CD8-positive, alpha-beta T cell (primary cell): ENCODE measurements at regions of chr14 and their contacts with region 1.

Region 1: DNA sequence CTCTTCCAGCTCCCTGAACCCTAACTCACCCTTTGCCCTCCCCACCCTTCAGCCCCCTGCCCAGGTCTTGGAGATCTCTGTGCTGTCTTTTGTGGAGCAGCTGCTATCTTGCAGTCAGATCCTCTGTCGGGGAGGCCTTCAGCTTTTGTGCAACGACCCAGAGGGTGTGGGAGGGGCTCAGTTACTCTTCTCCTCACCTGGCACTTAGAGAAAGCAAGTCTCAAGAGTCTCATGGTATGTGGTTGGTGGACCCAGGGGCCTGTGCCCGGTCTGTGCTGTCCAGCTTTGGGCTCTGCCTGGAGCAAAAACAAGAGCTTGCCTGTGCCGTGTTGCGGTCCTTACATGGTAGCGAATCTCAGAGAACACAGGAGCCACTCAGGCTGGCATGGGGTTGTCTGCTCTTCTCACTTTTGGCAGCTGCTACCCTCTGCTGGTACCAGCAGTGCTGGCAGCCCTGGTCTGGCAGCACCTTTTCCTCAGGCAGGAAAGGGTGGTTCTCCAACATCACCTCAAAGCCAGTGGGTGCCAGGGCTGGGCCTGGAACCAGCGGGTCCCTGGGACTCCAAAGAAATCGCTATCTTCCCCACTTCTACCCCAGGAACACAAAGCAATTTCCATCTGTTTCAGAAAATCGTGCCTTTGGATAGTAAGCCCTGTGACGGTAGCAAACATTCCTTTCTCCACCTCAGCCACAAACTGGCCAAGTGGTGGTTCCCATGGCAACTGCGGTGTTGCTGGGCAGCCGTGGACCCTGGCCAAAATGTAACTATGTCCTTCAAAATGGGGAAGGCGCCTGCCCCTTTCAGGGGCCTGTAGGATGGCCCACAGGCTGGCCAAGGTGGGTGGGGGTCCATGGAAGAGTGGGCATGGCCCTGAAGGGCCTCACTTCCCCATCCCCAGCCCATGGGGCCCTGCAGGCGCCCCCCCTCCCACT is 90.0 kb downstream of the RIN3 start:
- DNase-seq: peak; percentile 41 to 85 (median 63)
- ATAC-seq: peak; percentile 99
- H3K4me3 ChIP-seq: no peak overlapping the region
- H3K4me3 Mint-ChIP-seq: peak overlapping the region; percentile 72
- H3K27ac ChIP-seq: no peak overlapping the region
- H3K27ac Mint-ChIP-seq: peak overlapping the region; percentile 81
- H3K4me1 ChIP-seq: peaks cover 30% of the 10 kb centered on the region
- H3K4me1 Mint-ChIP-seq: peaks cover 47% of the 10 kb centered on the region
- H3K27me3 ChIP-seq: no peaks in the 10 kb centered on the region
- H3K27me3 Mint-ChIP-seq: no peaks in the 10 kb centered on the region
- CTCF ChIP-seq: peak; percentile 68

Region 2: DNA sequence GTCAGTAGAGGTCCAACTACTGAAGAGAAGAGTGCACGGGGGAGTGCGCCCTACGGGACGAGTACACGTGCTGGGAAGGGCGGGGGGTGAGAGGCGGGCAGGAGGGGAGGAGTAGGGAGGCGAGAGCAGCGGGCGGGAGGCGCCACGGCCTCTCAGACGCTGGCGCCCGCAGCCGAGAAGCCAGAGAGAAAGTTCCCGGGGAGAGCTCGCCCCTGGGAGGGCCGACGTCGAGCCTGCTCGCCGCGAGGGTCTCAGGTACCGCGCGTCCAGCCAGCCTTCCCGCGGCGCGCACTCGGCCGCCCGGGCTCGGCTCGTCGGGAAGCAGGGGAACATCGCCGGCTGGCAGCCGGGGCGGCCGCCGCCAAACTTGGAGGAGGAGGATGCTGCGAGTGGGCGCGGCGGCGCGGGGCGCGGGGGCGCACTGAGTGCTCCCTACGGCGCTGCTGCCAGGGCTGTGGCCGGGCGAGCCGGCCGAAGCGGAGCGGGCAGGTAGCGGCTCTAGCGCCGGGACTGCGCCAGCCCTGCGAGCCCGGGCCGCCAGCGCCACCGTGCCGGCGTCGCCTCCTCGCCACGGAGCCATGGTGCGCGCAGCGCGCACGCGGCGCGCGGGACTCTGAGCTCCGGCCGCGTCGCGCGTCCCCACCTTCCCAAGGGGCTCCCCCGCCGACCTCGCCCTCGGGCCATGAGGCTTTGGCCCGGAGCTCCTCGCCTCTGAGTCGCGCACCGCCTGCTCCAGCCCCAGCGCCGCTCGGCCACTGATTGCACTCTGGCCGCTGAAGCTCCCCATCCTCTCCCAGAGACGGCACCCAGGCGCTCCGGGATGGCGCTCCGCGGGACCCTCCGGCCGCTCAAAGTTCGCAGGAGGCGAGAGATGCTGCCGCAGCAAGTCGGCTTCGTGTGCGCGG is 280.3 kb before region 1 on chr14 and contains the start of gene SLC24A4:
- CTCF ChIA-PET with region 1: interaction called, 3 read pairs
- POLR2A ChIA-PET with region 1: no interaction called
- intact Hi-C with region 1: loop called (anchors 1 to 5 kb)
- DNase-seq: peak in 1 of 9 experiments; percentile 17
- ATAC-seq: no peak
- H3K4me3 ChIP-seq: peak within 1 kb of the TSS in 1 of 2 experiments; percentile 27
- H3K4me3 Mint-ChIP-seq: peak within 1 kb of the TSS; percentile 68
- H3K27ac ChIP-seq: no peak within 1 kb of the TSS
- H3K27ac Mint-ChIP-seq: no peak within 1 kb of the TSS
- H3K4me1 ChIP-seq: no peaks in the 10 kb centered on the region
- H3K4me1 Mint-ChIP-seq: peaks cover 11% of the 10 kb centered on the region
- H3K27me3 ChIP-seq: peaks cover 3 to 4% of the 10 kb centered on the region in 2 experiments
- H3K27me3 Mint-ChIP-seq: peaks cover 48% of the 10 kb centered on the region
- CTCF ChIP-seq: no peak
- total RNA-seq, gene SLC24A4: 0.06 TPM in 1 of 2 experiments, not detected in the other

Region 3: DNA sequence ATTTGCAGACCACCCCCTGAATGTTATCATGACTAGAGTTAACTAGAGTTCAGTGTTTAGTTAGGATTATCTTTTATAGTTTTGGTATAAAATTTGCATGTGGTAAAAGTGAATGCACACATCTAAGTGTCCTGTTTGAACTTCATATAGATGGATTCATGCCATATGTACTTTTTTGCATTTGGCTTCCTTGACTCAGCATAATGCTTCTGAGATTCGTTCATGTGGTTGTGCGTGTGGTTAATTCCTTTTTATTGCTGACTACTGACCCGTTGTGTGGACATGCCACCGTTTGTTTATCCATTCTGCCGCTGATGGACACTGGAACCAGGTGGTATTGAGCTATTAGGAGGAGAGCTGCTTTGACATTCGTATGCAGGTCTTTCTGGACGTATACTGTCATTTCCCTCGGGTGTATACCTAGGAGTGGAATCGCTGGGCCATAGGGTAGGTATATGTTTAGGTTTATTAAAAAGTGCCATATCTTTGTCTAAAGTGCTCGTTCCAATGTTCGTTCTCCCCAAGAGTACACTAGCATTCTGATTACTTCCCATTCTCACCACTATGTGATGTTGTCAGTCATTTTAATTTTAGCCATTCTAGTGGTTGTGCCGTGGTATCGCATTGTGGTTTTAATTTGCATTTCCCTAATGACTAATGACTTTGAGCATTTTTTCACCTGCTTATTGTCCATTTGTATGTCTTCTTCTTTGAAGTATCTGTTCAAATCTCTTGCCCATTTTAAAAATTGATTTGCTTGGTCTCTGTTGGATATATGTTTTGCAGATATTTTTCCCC is 52.3 kb before region 1 on chr14:
- CTCF ChIA-PET with region 1: interaction called, 10 read pairs
- POLR2A ChIA-PET with region 1: no interaction called
- intact Hi-C with region 1: loop called (anchors 5 kb)
- DNase-seq: peak in 2 of 9 experiments; percentile 67 to 82
- ATAC-seq: peak; percentile 57
- H3K4me3 ChIP-seq: no peak overlapping the region
- H3K4me3 Mint-ChIP-seq: no peak overlapping the region
- H3K27ac ChIP-seq: peak overlapping the region in 1 of 2 experiments; percentile 27
- H3K27ac Mint-ChIP-seq: peak overlapping the region; percentile 50
- H3K4me1 ChIP-seq: peaks cover 59% of the 10 kb centered on the region
- H3K4me1 Mint-ChIP-seq: peaks cover 74% of the 10 kb centered on the region
- H3K27me3 ChIP-seq: no peaks in the 10 kb centered on the region
- H3K27me3 Mint-ChIP-seq: no peaks in the 10 kb centered on the region
- CTCF ChIP-seq: peak; percentile 35

Region 4: GRCh38 chr14:92577321-92577742 is 26.2 kb before region 1 on chr14:
- CTCF ChIA-PET with region 1: interaction called, 4 read pairs
- POLR2A ChIA-PET with region 1: interaction called, 3 read pairs
- intact Hi-C with region 1: loop called in 1 of 2 experiments (anchors 1 kb)
- DNase-seq: peak in 7 of 9 experiments; percentile 24 to 72 (median 47)
- ATAC-seq: peak; percentile 70
- H3K4me3 ChIP-seq: peak overlapping the region; percentile 17 to 29
- H3K4me3 Mint-ChIP-seq: peak overlapping the region; percentile 81
- H3K27ac ChIP-seq: peak overlapping the region in 1 of 2 experiments; percentile 62
- H3K27ac Mint-ChIP-seq: peak overlapping the region; percentile 92
- H3K4me1 ChIP-seq: peaks cover 61% of the 10 kb centered on the region
- H3K4me1 Mint-ChIP-seq: peaks cover 84% of the 10 kb centered on the region
- H3K27me3 ChIP-seq: no peaks in the 10 kb centered on the region
- H3K27me3 Mint-ChIP-seq: no peaks in the 10 kb centered on the region
- CTCF ChIP-seq: no peak

Region 5: DNA sequence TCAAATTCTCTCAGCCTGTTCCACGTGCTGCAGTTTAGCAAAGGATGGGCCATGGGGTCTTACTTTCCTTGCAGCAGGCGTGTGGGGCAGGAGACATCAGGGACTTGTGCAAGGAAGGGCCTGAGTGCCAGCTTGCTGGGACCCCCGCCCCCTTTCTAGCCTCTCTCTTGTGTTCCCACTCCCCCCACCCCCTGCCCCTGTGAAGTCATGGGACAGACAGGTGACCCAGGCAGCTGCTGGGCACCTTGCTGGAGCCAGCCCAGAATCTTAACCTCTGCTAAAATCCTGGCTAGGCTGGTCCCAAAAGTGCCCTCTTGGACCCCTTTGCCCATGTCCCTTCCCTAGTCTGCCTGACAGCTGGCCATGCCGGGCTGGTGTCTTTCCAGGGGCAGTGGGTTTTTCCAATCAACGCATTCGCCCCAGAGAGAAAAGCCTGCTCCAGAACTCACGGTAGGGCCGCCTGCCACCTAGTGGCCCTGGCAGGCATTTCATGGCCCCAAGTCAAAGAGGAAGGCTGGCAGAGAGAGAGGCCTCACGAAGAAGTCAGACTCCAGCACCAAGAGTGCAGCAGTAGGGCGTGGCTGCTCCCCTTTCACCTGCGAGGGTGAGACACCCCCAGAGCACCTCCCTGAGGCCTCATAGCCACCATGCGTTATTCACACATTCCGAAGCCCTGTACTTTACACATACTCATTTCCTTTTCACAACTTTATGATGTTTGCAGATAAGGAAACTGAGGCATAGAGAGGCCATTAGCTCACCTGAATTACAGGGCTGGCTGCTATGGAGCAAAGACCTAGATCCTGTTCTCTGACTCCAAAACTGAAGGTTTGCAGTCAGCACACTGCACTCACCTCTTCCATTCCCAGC is 77.4 kb after region 1 on chr14:
- CTCF ChIA-PET with region 1: interaction called, 16 read pairs
- POLR2A ChIA-PET with region 1: no interaction called
- intact Hi-C with region 1: loop called in 1 of 2 experiments (anchors 2 kb)
- DNase-seq: peak; percentile 58 to 89 (median 77)
- ATAC-seq: peak; percentile 83
- H3K4me3 ChIP-seq: no peak overlapping the region
- H3K4me3 Mint-ChIP-seq: no peak overlapping the region
- H3K27ac ChIP-seq: peak overlapping the region in 1 of 2 experiments; percentile 72
- H3K27ac Mint-ChIP-seq: peak overlapping the region; percentile 88
- H3K4me1 ChIP-seq: peaks cover 25% of the 10 kb centered on the region
- H3K4me1 Mint-ChIP-seq: peaks cover 30% of the 10 kb centered on the region
- H3K27me3 ChIP-seq: no peaks in the 10 kb centered on the region
- H3K27me3 Mint-ChIP-seq: no peaks in the 10 kb centered on the region
- CTCF ChIP-seq: peak; percentile 87